ENCODE measurements at regions of chr6 and their contacts with region 1.

Region 1: DNA sequence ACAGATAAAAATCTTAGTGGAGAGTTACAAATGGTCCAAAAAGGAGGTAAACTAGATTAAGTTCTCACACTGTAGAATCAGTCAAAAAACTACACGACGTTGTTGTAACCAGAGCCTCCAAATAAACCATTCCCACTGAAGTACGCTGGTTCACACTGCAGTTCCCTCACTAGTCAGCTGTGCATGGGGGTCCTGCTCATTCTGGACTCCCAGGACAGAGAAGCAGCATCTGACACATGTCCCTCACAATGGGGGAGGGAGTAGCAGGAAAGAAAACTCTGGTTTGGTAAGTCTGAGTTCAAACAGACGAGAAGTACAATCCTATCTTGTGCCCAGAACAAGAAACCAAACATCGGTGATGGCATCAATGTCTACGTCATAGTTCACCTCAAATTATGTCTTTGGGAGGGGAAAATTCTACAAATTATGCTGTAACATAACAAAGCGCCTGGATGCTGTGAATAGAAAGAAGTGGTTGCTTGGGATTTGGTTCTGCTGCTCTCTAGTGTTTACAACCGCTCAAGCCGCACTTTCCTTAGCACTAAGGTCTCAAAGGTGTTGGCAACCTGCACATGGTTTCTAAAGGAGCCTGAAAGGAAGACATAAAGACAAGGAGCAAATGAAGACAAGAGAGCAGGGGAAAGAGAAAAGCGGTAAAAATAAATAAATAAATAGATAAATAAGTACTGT is 208.0 kb downstream of the GMDS start:
- DNase-seq: no peak
- H3K4me3 ChIP-seq: no peak overlapping the region
- H3K27ac ChIP-seq: no peak overlapping the region
- H3K4me1 ChIP-seq: no peaks in the 10 kb centered on the region
- H3K27me3 ChIP-seq: no peaks in the 10 kb centered on the region
- CTCF ChIP-seq: peak in 2 of 3 experiments; percentile 33 to 44; a peak in 2 of 4 replicates
- EP300 ChIP-seq: no peak
- POLR2A ChIP-seq: no peak
- RAD21 ChIP-seq: peak; percentile 68 to 72

Region 2: GRCh38 chr6:1893470-1894130 is 143.8 kb before region 1 on chr6:
- CTCF ChIA-PET with region 1: interaction called, 14 read pairs
- POLR2A ChIA-PET with region 1: no interaction called
- DNase-seq: no peak
- H3K4me3 ChIP-seq: no peak overlapping the region
- H3K27ac ChIP-seq: no peak overlapping the region
- H3K4me1 ChIP-seq: no peaks in the 10 kb centered on the region
- H3K27me3 ChIP-seq: no peaks in the 10 kb centered on the region
- CTCF ChIP-seq: peak; percentile 26 to 72 (median 60)
- EP300 ChIP-seq: no peak
- POLR2A ChIP-seq: no peak
- RAD21 ChIP-seq: peak; percentile 73 to 83

Region 3: DNA sequence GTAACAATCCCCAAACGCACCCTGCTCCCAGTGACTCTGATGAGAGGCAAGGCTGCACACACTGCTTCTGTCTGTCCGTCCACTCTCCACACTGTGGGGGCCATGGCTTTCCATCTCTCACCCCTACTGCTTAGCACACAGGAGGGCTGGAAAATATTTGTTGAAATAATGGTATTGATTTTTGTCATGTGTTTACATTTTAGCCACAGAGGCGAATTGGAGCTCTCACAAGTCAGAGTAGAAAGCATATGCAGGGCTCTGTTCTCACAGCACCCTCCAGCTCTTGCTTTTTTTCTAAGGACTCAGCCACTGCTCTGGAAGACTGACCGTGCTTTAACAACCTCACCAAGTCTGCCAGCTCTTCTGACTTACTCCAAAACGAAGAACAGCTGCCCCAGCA is 65.8 kb before region 1 on chr6:
- CTCF ChIA-PET with region 1: no interaction called
- POLR2A ChIA-PET with region 1: no interaction called
- DNase-seq: no peak
- H3K4me3 ChIP-seq: no peak overlapping the region
- H3K27ac ChIP-seq: no peak overlapping the region
- H3K4me1 ChIP-seq: peaks cover 0 to 4% (median 0%) of the 10 kb centered on the region in 4 experiments; a peak in 1 of 7 replicates
- H3K27me3 ChIP-seq: no peaks in the 10 kb centered on the region
- CTCF ChIP-seq: no peak
- EP300 ChIP-seq: no peak
- POLR2A ChIP-seq: no peak
- RAD21 ChIP-seq: no peak

Region 4: DNA sequence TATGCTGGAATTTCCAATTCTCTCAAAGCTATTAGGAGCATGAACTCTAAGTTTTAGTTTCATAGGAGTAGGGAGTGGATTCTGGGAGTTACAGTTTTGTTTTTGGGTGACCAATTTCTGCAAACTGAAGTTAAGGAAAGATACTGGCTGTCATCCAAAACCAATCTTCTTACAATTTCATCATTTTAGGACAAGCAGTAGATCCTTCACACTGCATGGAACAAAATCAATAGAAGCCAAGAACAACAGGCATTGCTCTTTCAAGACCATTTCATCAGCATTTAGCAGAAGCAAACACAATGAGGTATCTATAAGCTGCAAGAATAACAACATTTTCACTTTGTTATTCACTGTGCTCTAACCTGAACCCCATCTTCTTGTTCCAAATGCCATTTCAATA is 35.1 kb after region 1 on chr6:
- CTCF ChIA-PET with region 1: no interaction called
- POLR2A ChIA-PET with region 1: no interaction called
- DNase-seq: no peak
- H3K4me3 ChIP-seq: no peak overlapping the region
- H3K27ac ChIP-seq: no peak overlapping the region
- H3K4me1 ChIP-seq: no peaks in the 10 kb centered on the region
- H3K27me3 ChIP-seq: no peaks in the 10 kb centered on the region
- CTCF ChIP-seq: no peak
- EP300 ChIP-seq: no peak
- POLR2A ChIP-seq: no peak
- RAD21 ChIP-seq: no peak

Measured in H1 (cell line).